Natural killer cell (primary cell): ENCODE measurements at regions of chr11 and their contacts with region 1.

Region 1: DNA sequence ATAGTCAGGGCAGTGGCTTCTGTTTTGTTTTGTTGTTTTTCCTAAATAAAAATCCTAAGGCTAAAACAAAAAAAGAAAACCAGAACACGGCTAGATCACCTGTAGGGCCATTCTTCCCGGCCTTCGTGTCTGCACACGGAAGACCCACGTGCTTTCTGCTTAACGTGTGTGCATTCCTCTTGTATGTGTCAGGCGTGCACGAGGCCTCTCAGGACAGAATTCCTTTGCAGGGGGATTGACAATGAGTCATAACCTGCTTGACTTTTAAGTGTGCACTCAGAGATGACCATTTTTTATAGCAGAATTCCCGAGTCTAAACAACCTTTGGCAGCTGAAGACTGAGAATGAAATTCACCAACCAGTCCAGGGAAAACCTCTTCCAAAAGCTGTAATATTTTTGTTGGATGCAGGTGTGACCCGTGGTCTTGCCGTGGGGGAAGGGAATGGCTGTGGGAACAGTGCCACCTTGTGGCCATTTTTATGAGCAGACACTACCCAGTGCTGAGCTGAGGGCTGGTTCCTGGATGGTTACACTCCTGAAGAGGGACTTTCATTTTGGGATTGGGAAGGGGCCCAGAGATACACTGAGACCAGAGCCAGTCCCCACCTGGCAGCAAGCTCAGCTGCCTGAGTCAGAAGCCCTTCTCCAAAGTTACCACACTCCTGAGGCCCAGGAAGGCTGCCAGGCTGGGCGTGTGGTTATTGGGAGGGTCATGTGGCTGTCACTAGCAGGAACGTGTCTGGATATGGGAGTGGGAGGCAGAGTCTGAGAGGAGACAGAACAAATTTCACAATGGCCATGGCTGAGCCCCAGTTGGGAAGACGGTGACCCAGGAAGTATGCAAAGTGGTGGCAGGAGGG is 35.8 kb upstream of the DKK3 start:
- DNase-seq: peak; percentile 41 to 85
- ATAC-seq: peak; percentile 66 to 80 (median 70)
- H3K4me3 ChIP-seq: no peak overlapping the region
- H3K4me3 Mint-ChIP-seq: no peak overlapping the region
- H3K27ac ChIP-seq: no peak overlapping the region
- H3K27ac Mint-ChIP-seq: no peak overlapping the region
- H3K4me1 ChIP-seq: peaks cover 9% of the 10 kb centered on the region
- H3K4me1 Mint-ChIP-seq: peaks cover 4 to 7% of the 10 kb centered on the region in 2 donors
- H3K27me3 ChIP-seq: no peaks in the 10 kb centered on the region
- H3K27me3 Mint-ChIP-seq: peaks cover 8 to 17% of the 10 kb centered on the region in 2 donors
- CTCF ChIP-seq: peak; percentile 84

Region 2: GRCh38 chr11:11931461-11932055 is 112.6 kb before region 1 on chr11:
- intact Hi-C with region 1: loop called (anchors 5 kb)
- DNase-seq: peak in 1 of 2 donors; percentile 64
- ATAC-seq: peak; percentile 53 to 58 (median 55)
- H3K4me3 ChIP-seq: no peak overlapping the region
- H3K4me3 Mint-ChIP-seq: no peak overlapping the region
- H3K27ac ChIP-seq: no peak overlapping the region
- H3K27ac Mint-ChIP-seq: no peak overlapping the region
- H3K4me1 ChIP-seq: no peaks in the 10 kb centered on the region
- H3K4me1 Mint-ChIP-seq: peaks cover 8 to 16% of the 10 kb centered on the region in 2 donors
- H3K27me3 ChIP-seq: no peaks in the 10 kb centered on the region
- H3K27me3 Mint-ChIP-seq: no peaks in the 10 kb centered on the region
- CTCF ChIP-seq: peak; percentile 64

Region 3: DNA sequence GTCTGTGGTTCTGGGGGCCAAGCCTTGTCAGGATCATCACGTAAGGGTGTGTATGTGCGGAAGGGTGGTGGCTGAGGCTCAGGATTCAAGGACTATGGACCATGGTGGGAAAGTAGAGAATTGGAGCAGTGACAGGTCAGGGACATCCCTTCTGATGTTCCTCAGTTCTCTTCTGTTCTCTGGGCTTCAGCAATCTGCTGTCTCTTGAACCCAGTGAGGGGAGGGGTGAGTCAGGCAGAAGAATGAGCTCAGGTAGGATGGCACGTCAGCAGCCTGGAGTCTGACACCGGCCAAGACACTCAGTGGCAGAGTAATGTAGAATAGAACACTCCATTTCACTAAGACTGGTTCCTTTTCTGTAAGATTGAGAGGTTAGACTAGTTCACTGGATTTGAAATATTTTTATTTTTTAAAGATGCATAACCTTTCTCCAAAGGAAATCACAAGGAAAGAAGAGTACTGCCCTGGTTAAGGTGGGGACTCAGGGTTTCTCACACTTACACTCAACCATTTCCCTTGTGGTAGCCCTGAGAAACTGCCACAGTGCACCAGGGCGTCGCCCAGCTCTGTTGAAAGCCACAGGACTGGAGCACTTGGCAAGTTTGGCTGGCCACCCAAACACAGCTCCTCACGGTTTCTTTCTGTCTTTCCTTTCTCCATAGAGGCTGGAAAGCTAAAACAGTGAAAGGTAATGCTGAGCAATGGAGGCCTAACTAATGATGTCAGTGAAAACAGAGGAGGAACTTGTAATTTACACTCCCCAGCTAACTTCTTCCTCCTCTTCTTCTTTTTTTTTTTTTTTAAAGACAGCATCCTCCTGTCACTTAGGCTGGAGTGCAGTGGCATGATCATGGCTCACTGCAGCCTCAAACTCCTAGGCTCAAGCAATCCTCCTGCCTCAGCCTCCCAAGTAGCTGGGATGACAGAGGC is 43.2 kb after region 1 on chr11:
- intact Hi-C with region 1: loop called (anchors 5 kb)
- DNase-seq: peak; percentile 51 to 76
- ATAC-seq: peak; percentile 80 to 93 (median 91)
- H3K4me3 ChIP-seq: no peak overlapping the region
- H3K4me3 Mint-ChIP-seq: peak overlapping the region; percentile 74
- H3K27ac ChIP-seq: peak overlapping the region; percentile 38
- H3K27ac Mint-ChIP-seq: peak overlapping the region; percentile 39 to 58
- H3K4me1 ChIP-seq: peaks cover 69% of the 10 kb centered on the region
- H3K4me1 Mint-ChIP-seq: peaks cover 70 to 80% of the 10 kb centered on the region in 2 donors
- H3K27me3 ChIP-seq: peaks cover 3% of the 10 kb centered on the region
- H3K27me3 Mint-ChIP-seq: peaks cover 16 to 23% of the 10 kb centered on the region in 2 donors
- CTCF ChIP-seq: no peak

Region 4: GRCh38 chr11:12258451-12258850 is 214.3 kb after region 1 on chr11:
- intact Hi-C with region 1: no loop called
- DNase-seq: no peak
- ATAC-seq: no peak
- H3K4me3 ChIP-seq: no peak overlapping the region
- H3K4me3 Mint-ChIP-seq: no peak overlapping the region
- H3K27ac ChIP-seq: no peak overlapping the region
- H3K27ac Mint-ChIP-seq: no peak overlapping the region
- H3K4me1 ChIP-seq: no peaks in the 10 kb centered on the region
- H3K4me1 Mint-ChIP-seq: no peaks in the 10 kb centered on the region
- H3K27me3 ChIP-seq: no peaks in the 10 kb centered on the region
- H3K27me3 Mint-ChIP-seq: no peaks in the 10 kb centered on the region
- CTCF ChIP-seq: no peak

Region 5: GRCh38 chr11:12281571-12282478 is 237.6 kb after region 1 on chr11:
- intact Hi-C with region 1: loop called (anchors 1 kb)
- DNase-seq: peak; percentile 73 to 88
- ATAC-seq: peak; percentile 77 to 86 (median 82)
- H3K4me3 ChIP-seq: no peak overlapping the region
- H3K4me3 Mint-ChIP-seq: no peak overlapping the region
- H3K27ac ChIP-seq: no peak overlapping the region
- H3K27ac Mint-ChIP-seq: no peak overlapping the region
- H3K4me1 ChIP-seq: peaks cover 4% of the 10 kb centered on the region
- H3K4me1 Mint-ChIP-seq: no peaks in the 10 kb centered on the region
- H3K27me3 ChIP-seq: no peaks in the 10 kb centered on the region
- H3K27me3 Mint-ChIP-seq: no peaks in the 10 kb centered on the region
- CTCF ChIP-seq: peak; percentile 95

Region 6: GRCh38 chr11:12888525-12889158 is 844.5 kb after region 1 on chr11:
- intact Hi-C with region 1: loop called (anchors 10 kb)
- DNase-seq: peak; percentile 21 to 78
- ATAC-seq: peak in 2 of 3 donors; percentile 23 to 63
- H3K4me3 ChIP-seq: no peak overlapping the region
- H3K4me3 Mint-ChIP-seq: no peak overlapping the region
- H3K27ac ChIP-seq: no peak overlapping the region
- H3K27ac Mint-ChIP-seq: no peak overlapping the region
- H3K4me1 ChIP-seq: no peaks in the 10 kb centered on the region
- H3K4me1 Mint-ChIP-seq: no peaks in the 10 kb centered on the region
- H3K27me3 ChIP-seq: no peaks in the 10 kb centered on the region
- H3K27me3 Mint-ChIP-seq: peaks cover 10 to 16% of the 10 kb centered on the region in 2 donors
- CTCF ChIP-seq: peak; percentile 16